IMR-90 (cell line): ENCODE measurements at regions of chr4 and their contacts with region 1.

Region 1: DNA sequence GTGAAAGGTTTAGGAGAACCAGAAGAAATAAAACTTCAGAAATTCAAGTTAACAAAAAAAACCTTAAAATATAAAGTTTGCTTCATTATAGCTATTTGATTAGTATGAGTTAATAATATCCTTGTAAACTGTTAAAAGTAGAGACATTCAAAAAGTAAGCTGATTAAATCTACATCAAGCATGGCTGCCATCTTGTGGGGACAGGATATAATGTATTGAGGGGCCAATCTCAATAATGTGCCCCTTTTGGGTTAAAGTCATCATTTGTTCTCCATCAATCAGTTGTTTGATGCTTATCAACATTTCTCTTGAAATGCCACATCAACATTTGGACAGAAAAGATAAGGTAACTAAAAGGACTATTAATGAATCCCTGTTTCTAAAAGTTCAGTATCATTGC is 4.6 kb upstream of the GRID2 start:
- DNase-seq: peak; percentile 21
- ATAC-seq: peak; percentile 42; the same call in 1 of the 2 replicates
- H3K4me3 ChIP-seq: no peak overlapping the region
- H3K27ac ChIP-seq: no peak overlapping the region
- H3K4me1 ChIP-seq: no peaks in the 10 kb centered on the region
- H3K27me3 ChIP-seq: peaks cover 12% of the 10 kb centered on the region
- CTCF ChIP-seq: peak; percentile 49
- POLR2A ChIP-seq: no peak
- RAD21 ChIP-seq: peak; percentile 63

Region 2: DNA sequence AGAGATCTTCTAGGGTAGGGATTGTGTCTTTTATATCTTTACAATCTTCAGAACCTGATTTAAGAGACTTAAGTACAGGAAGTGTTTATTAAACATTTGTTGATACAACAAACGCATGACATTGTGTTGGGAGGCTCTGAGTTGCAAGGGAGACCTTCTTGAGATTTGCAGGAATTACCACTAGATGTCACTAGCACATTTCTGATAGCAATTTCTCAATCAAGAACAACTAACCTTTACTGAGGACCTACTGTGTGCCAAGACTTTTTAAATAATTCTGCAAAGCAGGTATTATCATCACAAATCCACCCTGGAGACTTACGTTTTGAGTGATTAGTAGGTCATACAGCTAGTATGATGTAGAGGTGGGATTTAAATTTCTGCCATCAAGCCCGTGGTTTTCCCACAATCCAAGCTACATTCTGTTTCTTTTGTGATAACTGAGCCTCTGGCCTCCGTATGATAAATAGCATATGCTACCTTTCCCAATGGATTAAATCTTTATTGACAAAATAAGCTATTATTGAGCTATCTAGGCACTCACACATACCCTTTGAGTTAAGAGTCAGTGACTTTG is 1185.9 kb before region 1 on chr4:
- CTCF ChIA-PET with region 1: no interaction called
- POLR2A ChIA-PET with region 1: no interaction called
- dilution Hi-C with region 1: no loop called
- in situ Hi-C with region 1: no loop called
- intact Hi-C with region 1: loop called (anchors 10 kb)
- DNase-seq: peak; percentile 6
- ATAC-seq: no peak
- H3K4me3 ChIP-seq: no peak overlapping the region
- H3K27ac ChIP-seq: no peak overlapping the region
- H3K4me1 ChIP-seq: no peaks in the 10 kb centered on the region
- H3K27me3 ChIP-seq: no peaks in the 10 kb centered on the region
- CTCF ChIP-seq: peak; percentile 40
- POLR2A ChIP-seq: no peak
- RAD21 ChIP-seq: peak; percentile 46

Region 3: DNA sequence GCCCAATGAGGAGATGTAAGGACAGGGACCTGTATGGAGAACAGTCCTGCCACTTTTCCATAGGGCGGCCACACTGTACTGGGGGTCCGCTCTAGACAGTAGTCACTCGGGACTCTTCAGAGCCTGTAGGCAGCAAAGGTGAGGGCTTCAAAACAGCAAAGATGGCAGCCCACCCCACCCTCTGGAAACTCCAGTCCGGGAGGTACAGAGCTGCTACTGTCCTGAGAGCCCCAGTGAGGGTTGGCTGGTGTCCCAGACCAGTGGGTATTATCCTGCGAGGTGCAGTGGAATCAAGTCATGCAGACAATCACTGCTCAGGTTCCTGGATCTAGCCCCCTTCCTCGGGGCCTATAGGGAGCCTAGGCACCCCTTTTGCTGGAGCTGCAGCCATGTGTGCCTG is 780.0 kb before region 1 on chr4:
- CTCF ChIA-PET with region 1: no interaction called
- POLR2A ChIA-PET with region 1: no interaction called
- dilution Hi-C with region 1: no loop called
- in situ Hi-C with region 1: no loop called
- intact Hi-C with region 1: no loop called
- DNase-seq: no peak
- ATAC-seq: no peak
- H3K4me3 ChIP-seq: no peak overlapping the region
- H3K27ac ChIP-seq: no peak overlapping the region
- H3K4me1 ChIP-seq: no peaks in the 10 kb centered on the region
- H3K27me3 ChIP-seq: no peaks in the 10 kb centered on the region
- CTCF ChIP-seq: no peak
- POLR2A ChIP-seq: no peak
- RAD21 ChIP-seq: no peak

Region 4: DNA sequence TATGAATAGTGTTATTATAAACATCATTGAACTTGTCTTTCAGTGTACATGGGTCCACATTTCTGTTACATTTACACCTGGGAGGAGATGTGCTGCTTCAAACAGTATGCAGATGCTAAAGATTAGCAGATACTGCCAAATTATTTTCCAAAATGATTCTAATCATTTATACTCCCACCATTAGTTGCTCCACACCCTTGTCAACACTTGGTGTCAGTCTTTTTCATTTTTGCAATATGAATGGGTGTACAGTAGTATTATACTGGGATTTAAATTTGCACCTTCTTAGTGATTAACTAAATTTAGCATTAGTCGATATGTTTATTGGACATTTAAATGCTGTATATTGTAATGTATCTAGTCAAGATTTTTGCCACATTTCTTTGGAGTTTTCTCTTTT is 126.9 kb before region 1 on chr4:
- CTCF ChIA-PET with region 1: no interaction called
- POLR2A ChIA-PET with region 1: no interaction called
- dilution Hi-C with region 1: no loop called
- in situ Hi-C with region 1: no loop called
- intact Hi-C with region 1: loop called (anchors 5 kb)
- DNase-seq: no peak
- ATAC-seq: peak; percentile 48; the same call in 1 of the 2 replicates
- H3K4me3 ChIP-seq: no peak overlapping the region
- H3K27ac ChIP-seq: no peak overlapping the region
- H3K4me1 ChIP-seq: no peaks in the 10 kb centered on the region
- H3K27me3 ChIP-seq: no peaks in the 10 kb centered on the region; the same call in 1 of the 2 replicates
- CTCF ChIP-seq: peak; percentile 46
- POLR2A ChIP-seq: no peak
- RAD21 ChIP-seq: peak; percentile 50

Region 5: GRCh38 chr4:92359491-92359890 is 60.3 kb after region 1 on chr4:
- CTCF ChIA-PET with region 1: no interaction called
- POLR2A ChIA-PET with region 1: no interaction called
- dilution Hi-C with region 1: no loop called
- in situ Hi-C with region 1: no loop called
- intact Hi-C with region 1: no loop called
- DNase-seq: no peak
- ATAC-seq: no peak
- H3K4me3 ChIP-seq: no peak overlapping the region
- H3K27ac ChIP-seq: no peak overlapping the region
- H3K4me1 ChIP-seq: no peaks in the 10 kb centered on the region
- H3K27me3 ChIP-seq: no peaks in the 10 kb centered on the region
- CTCF ChIP-seq: no peak
- POLR2A ChIP-seq: no peak
- RAD21 ChIP-seq: no peak